Prostate gland (tissue), 2 donors: ENCODE measurements at regions of chr3 and their contacts with region 1.

Region 1: DNA sequence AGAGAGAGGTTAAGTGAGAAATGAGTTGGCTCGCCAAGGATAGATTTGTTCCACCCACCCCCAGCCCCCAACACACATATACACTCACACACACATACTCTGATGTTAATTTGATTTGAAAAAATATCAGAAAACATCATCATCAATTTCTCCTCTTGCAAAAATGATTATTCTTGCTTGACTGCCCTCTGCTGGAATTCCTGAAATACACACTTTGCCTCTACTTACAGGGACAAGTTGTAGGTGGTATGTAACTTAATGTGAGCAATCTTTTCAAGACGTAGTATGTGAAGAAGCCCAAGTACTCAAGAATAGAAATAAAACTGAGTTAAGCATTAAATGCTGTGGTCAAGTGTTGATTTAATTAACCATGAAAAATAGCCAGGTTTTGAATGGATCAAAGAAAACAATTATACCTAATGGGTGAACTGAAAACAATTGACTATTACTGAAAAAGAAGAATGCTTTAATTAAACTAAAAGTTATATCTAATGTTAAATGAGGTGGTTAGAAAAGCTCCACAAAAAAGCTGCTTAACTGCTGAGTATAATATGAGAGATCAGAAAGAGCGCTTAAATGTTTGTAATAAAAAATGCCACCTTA is 46.6 kb upstream of the MDFIC2 start:
- DNase-seq: no peak
- H3K4me3 ChIP-seq: no peak overlapping the region
- H3K27ac ChIP-seq: no peak overlapping the region
- H3K4me1 ChIP-seq: no peaks in the 10 kb centered on the region
- H3K27me3 ChIP-seq: no peaks in the 10 kb centered on the region
- CTCF ChIP-seq: peak in 3 of 4 experiments; percentile 47 to 65 (median 54)
- POLR2A ChIP-seq: no peak

Region 2: DNA sequence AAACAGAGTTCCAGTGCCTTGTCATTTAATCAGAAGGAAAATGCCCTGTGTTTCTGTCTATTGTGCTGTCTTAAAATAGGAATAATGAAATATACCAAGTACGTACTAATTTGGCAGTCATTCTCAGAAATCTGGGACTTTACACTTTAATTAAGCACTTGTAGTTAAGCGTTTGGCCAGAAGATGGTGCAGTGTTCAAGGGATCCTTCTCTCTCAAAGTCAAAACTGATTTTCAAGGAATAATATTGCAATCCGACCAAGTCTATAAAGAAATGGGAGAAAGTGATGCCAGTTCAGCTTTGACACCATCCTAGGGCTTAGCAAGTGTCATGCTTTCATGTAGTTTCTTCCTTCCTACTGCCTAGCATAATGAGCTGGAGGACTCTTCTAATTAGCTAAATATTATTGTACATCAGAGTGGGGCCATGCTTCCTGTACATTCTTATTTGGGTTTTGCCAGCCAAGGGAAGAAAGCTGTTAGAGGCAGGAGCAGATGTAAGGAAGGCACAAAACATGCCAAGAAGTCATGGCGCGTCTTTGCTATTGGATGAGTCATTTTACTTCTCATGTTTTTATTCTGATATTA is 294.8 kb before region 1 on chr3:
- intact Hi-C with region 1: loop called (anchors 2 kb)
- DNase-seq: peak; percentile 12
- H3K4me3 ChIP-seq: no peak overlapping the region
- H3K27ac ChIP-seq: no peak overlapping the region
- H3K4me1 ChIP-seq: no peaks in the 10 kb centered on the region
- H3K27me3 ChIP-seq: no peaks in the 10 kb centered on the region
- CTCF ChIP-seq: peak in 3 of 4 experiments; percentile 60 to 74 (median 72)
- POLR2A ChIP-seq: no peak

Region 3: DNA sequence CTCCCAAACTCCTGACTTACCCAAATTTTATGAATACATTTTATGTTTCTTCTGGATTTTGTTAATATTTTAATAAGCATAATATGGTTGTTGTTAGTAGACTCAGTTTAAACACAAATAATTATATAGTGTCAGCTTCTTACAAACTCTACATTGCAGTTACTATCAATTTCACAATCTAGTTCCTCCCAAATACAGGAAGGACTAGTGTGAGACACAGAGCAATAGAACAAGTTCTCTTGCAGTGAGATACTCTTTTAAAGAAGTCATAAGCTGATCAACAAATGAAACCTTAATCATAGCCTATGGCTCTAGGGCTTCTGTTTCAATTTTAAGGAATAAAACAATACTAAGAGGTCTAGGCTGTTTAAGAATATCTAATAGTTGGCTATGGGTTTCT is 273.5 kb before region 1 on chr3:
- intact Hi-C with region 1: loop called (anchors 5 kb)
- DNase-seq: no peak
- H3K4me3 ChIP-seq: no peak overlapping the region
- H3K27ac ChIP-seq: no peak overlapping the region
- H3K4me1 ChIP-seq: no peaks in the 10 kb centered on the region
- H3K27me3 ChIP-seq: no peaks in the 10 kb centered on the region
- CTCF ChIP-seq: no peak
- POLR2A ChIP-seq: no peak

Region 4: GRCh38 chr3:71579935-71580406 is 1220.9 kb after region 1 on chr3:
- intact Hi-C with region 1: no loop called
- DNase-seq: peak; percentile 17
- H3K4me3 ChIP-seq: peak overlapping the region; percentile 79 to 90
- H3K27ac ChIP-seq: peak overlapping the region; percentile 98 to 100
- H3K4me1 ChIP-seq: no peaks in the 10 kb centered on the region
- H3K27me3 ChIP-seq: no peaks in the 10 kb centered on the region
- CTCF ChIP-seq: no peak
- POLR2A ChIP-seq: no peak